Adrenal gland (tissue), 19 donors: ENCODE measurements at regions of chr13 and their contacts with region 1.

Region 1: GRCh38 chr13:59677966-59678814 is 485.5 kb downstream of the DIAPH3 start:
- DNase-seq: peak in 3 of 7 donors; percentile 18 to 40 (median 20)
- H3K4me3 ChIP-seq: no peak overlapping the region
- H3K27ac ChIP-seq: no peak overlapping the region
- H3K4me1 ChIP-seq: no peaks in the 10 kb centered on the region
- H3K27me3 ChIP-seq: no peaks in the 10 kb centered on the region
- CTCF ChIP-seq: peak; percentile 51 to 86 (median 77)
- POLR2A ChIP-seq: no peak

Region 2: DNA sequence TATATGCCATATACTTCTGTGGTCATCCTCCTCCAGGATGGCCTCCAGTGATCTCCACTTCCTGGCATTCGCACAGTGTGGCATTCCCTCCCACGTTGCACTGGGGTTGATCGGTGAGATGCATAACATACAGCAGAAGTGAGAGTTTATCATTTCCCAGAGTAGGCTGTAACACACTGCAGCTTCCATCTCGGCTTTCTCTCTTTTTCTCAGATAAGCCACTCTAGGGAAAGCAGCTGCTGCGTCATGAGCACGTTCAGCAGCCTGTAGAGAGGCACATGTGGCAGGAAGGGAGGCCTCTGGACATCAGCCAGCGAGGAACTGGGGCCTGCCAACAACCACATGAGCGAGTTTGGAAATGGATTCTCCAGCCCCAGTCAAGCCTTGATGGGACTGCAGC is 321.6 kb before region 1 on chr13:
- intact Hi-C with region 1: no loop called
- DNase-seq: peak; percentile 48 to 88 (median 68)
- H3K4me3 ChIP-seq: no peak overlapping the region
- H3K27ac ChIP-seq: peak overlapping the region in 2 of 5 donors; percentile 0 to 57
- H3K4me1 ChIP-seq: peaks cover 0 to 12% of the 10 kb centered on the region in 2 donors
- H3K27me3 ChIP-seq: no peaks in the 10 kb centered on the region
- CTCF ChIP-seq: no peak
- POLR2A ChIP-seq: no peak

Region 3: GRCh38 chr13:59391696-59392095 is 286.5 kb before region 1 on chr13:
- intact Hi-C with region 1: loop called (anchors 5 to 10 kb)
- DNase-seq: peak; percentile 48 to 74 (median 65)
- H3K4me3 ChIP-seq: no peak overlapping the region
- H3K27ac ChIP-seq: no peak overlapping the region
- H3K4me1 ChIP-seq: peaks cover 0 to 4% of the 10 kb centered on the region in 2 donors
- H3K27me3 ChIP-seq: peaks cover 4% of the 10 kb centered on the region
- CTCF ChIP-seq: peak; percentile 69 to 88 (median 81)
- POLR2A ChIP-seq: no peak

Region 4: DNA sequence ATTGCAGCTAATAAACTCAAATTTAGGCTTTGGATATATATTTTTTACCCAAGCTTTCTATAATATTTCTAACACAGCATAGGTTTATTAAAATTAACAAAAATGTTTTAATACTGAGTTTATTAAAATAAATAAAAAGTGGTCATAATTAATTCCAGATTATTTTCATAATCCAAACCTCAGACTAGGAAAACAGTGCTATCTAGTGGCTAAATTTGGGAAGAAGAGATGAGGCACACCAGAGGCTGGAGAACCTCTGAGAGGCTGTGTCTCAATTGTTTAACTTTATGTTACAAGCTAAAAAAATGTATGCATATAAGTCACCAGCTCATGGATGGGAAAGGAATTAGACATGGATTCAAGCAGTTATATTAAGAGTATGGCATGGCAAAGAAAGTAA is 93.1 kb after region 1 on chr13:
- intact Hi-C with region 1: loop called in 1 of 2 experiments (anchors 10 kb)
- DNase-seq: no peak
- H3K4me3 ChIP-seq: no peak overlapping the region
- H3K27ac ChIP-seq: no peak overlapping the region
- H3K4me1 ChIP-seq: no peaks in the 10 kb centered on the region
- H3K27me3 ChIP-seq: no peaks in the 10 kb centered on the region
- CTCF ChIP-seq: peak; percentile 30 to 61 (median 36)
- POLR2A ChIP-seq: no peak

Region 5: DNA sequence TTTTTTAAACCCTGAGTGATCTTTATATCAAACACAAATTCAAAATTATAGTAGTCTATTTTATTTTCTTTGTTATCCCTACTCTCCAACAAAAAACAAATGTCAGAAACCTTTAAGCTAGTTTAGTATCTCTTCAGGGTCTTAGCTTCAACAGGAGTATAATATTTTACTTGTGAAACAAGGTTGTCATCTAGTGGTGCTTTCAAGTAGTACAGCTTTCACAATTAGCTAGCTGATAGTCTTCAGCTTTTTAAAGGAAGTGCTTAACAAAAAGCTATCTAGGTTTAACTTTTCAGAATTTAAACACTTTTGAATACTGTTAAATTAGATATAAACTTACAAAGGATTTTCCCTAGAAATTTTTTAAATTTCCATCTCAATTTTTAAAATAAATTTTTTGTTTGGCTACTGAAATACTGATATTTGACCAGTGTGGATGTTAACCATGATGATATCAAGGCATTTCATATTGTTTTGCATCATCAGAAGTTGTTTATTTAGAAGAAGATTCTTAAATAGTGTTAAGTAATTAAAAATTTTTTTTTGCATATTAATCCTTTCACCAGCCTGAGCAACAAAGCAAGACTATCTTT is 753.0 kb after region 1 on chr13:
- intact Hi-C with region 1: loop called in 1 of 2 experiments (anchors 10 kb)
- DNase-seq: no peak
- H3K4me3 ChIP-seq: no peak overlapping the region
- H3K27ac ChIP-seq: no peak overlapping the region
- H3K4me1 ChIP-seq: no peaks in the 10 kb centered on the region
- H3K27me3 ChIP-seq: no peaks in the 10 kb centered on the region
- CTCF ChIP-seq: peak; percentile 85 to 99 (median 94)
- POLR2A ChIP-seq: no peak